CD4-positive, alpha-beta memory T cell (primary cell): ENCODE measurements at regions of chr9 and their contacts with region 1.

Region 1: GRCh38 chr9:108885643-108886348 is 23.7 kb downstream of the ACTL7A start:
- DNase-seq: no peak
- H3K4me3 ChIP-seq: no peak overlapping the region
- H3K4me3 Mint-ChIP-seq: no peak overlapping the region
- H3K27ac ChIP-seq: no peak overlapping the region
- H3K27ac Mint-ChIP-seq: no peak overlapping the region
- H3K4me1 ChIP-seq: no peaks in the 10 kb centered on the region
- H3K4me1 Mint-ChIP-seq: peaks cover 0 to 2% (median 0%) of the 10 kb centered on the region in 4 donors
- H3K27me3 ChIP-seq: no peaks in the 10 kb centered on the region
- H3K27me3 Mint-ChIP-seq: no peaks in the 10 kb centered on the region

Region 2: DNA sequence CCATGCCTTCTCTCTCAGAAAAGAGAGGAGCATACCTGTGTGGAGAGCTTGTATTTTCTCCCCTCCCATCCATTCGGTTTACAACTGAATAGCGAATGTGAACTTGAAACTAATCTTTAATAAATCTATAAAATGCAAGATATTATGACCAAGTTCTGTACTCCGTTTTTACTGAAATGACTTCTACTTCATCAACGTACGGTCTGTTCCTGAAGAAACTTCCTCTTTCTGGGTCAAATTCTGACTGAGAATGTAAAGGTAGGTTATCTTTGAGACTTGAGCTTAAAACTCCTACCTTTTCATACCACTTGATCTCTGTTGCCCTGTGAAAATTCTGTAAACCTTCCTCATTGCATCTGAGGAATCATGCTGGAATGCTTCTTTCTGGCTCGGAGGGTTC is 131.7 kb after region 1 on chr9:
- CTCF ChIA-PET with region 1: no interaction called
- POLR2A ChIA-PET with region 1: no interaction called
- intact Hi-C with region 1: no loop called
- DNase-seq: no peak
- H3K4me3 ChIP-seq: no peak overlapping the region
- H3K4me3 Mint-ChIP-seq: no peak overlapping the region
- H3K27ac ChIP-seq: no peak overlapping the region
- H3K27ac Mint-ChIP-seq: peak overlapping the region in 4 of 7 donors; percentile 27 to 69 (median 52)
- H3K4me1 ChIP-seq: peaks cover 4% of the 10 kb centered on the region
- H3K4me1 Mint-ChIP-seq: peaks cover 6 to 17% (median 10%) of the 10 kb centered on the region in 4 donors
- H3K27me3 ChIP-seq: no peaks in the 10 kb centered on the region
- H3K27me3 Mint-ChIP-seq: no peaks in the 10 kb centered on the region

Region 3: DNA sequence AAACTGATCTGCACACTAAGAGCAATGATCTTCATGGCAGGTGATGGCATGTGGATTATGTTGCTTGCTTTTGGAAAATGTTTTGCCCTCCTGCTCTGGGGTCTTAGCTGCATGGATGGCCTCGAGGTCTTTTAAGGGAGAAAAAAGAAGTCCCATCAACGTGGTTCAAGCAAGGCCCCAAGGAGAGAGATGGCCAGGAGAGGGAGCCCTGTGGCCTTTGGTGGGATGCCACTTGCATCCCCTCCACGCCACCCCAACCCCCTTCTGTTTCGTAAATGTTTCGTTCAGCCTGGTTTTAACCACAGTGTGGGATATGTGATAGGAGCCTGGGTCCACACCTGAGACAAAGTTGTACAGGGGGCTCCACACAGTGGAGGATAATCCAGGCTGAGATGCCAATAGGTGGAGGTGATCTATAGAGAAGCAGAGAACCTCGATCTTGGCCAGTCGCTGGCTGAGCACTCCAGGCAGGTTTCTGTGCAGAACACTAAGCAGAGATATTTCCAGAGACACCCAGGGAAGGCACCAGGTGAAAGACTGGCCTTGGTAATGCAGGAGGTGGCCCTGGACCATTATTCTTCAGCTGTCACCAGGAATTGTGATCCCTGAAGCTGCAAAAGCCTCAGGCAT is 307.1 kb after region 1 on chr9:
- CTCF ChIA-PET with region 1: no interaction called
- POLR2A ChIA-PET with region 1: no interaction called
- intact Hi-C with region 1: loop called (anchors 10 kb)
- DNase-seq: no peak
- H3K4me3 ChIP-seq: no peak overlapping the region
- H3K4me3 Mint-ChIP-seq: no peak overlapping the region
- H3K27ac ChIP-seq: no peak overlapping the region
- H3K27ac Mint-ChIP-seq: no peak overlapping the region
- H3K4me1 ChIP-seq: no peaks in the 10 kb centered on the region
- H3K4me1 Mint-ChIP-seq: no peaks in the 10 kb centered on the region
- H3K27me3 ChIP-seq: no peaks in the 10 kb centered on the region
- H3K27me3 Mint-ChIP-seq: no peaks in the 10 kb centered on the region

Region 4: DNA sequence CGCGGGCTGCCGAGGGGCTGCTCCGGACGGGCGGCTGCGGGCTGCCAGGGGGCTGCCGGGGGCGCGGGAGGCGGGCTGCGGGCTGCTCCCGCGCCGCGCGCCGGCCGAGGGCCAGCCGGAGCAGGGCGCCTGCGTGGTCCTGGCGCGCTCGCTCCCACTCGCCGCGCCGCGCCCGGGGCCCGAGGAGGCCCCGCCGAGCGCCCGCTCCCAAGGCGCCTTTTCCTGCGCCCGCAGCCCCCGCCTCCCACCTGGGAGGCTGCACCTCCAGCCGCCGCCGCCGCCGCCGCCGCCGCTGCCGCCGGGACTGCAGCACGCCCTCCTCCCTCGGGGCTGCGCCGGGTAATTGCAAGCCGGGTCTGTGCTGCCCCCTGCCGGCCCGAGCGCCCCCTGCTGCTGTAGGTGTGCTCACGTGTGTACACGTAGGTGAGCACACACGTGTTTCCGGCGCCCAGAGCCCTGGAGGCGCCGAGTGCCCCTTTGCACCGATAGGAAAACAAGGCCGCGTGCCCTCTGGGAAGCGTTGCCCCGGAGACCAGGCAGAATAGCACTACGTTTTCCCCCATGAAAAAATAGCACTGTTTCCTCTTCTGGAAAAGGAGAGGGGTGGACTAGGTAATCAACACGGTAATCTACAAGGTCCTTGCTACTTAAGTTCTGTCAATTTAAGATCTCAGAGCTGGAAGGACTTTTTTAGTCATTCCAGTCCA is 435.1 kb after region 1 on chr9 and contains the start of gene EPB41L4B:
- CTCF ChIA-PET with region 1: no interaction called
- POLR2A ChIA-PET with region 1: no interaction called
- intact Hi-C with region 1: loop called (anchors 2 kb)
- DNase-seq: peak; percentile 77 to 83 (median 79)
- H3K4me3 ChIP-seq: no peak within 1 kb of the TSS
- H3K4me3 Mint-ChIP-seq: peak within 1 kb of the TSS; percentile 78 to 93 (median 84)
- H3K27ac ChIP-seq: no peak within 1 kb of the TSS
- H3K27ac Mint-ChIP-seq: peak within 1 kb of the TSS in 2 of 7 donors; percentile 22 to 71
- H3K4me1 ChIP-seq: peaks cover 8% of the 10 kb centered on the region
- H3K4me1 Mint-ChIP-seq: peaks cover 6 to 24% (median 8%) of the 10 kb centered on the region in 4 donors
- H3K27me3 ChIP-seq: peaks cover 7% of the 10 kb centered on the region
- H3K27me3 Mint-ChIP-seq: peaks cover 43 to 60% of the 10 kb centered on the region in 2 donors
- total RNA-seq, gene EPB41L4B: not detected